PC-9 (cell line): ENCODE measurements at regions of chr1 and their contacts with region 1.

Region 1: DNA sequence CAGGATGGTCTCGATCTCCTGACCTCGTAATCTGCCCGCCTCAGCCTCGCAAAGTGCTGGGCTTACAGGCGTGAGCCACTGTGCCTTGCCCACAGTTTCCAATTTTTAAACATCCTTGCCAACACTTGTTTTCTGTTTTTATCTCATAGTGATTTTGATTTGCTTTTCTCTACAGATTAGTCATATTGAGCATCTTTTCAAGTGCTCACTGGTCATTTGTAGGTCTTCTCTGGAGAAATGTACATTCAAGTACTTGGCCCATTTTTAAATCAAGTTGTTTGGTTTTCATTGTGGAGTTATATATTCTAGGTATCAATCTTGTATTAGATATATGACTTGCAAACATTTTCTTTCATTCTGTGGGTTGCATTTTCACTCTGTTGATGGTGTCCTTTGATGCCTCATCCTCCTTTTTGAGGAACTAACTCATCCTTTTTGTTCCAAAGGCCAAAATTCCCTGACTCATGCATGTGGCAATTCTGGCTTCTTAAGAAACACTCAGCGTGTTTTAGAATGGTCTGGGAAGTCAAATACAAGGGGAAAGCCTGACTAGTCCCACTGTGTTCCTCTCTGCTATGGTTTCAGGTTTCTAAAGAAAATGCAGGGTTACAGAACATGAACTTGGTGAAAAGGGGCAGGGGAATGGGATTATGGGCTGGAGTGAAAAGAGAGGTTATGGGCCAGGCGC is 37.3 kb downstream of the PTAFR start:
- DNase-seq: peak in 1 of 2 experiments; percentile 45
- H3K4me3 ChIP-seq: no peak overlapping the region
- H3K27ac ChIP-seq: peak overlapping the region; percentile 26; the same call in 1 of the 2 replicates
- H3K4me1 ChIP-seq: peaks cover 42% of the 10 kb centered on the region
- H3K27me3 ChIP-seq: no peaks in the 10 kb centered on the region
- CTCF ChIP-seq: no peak

Region 2: DNA sequence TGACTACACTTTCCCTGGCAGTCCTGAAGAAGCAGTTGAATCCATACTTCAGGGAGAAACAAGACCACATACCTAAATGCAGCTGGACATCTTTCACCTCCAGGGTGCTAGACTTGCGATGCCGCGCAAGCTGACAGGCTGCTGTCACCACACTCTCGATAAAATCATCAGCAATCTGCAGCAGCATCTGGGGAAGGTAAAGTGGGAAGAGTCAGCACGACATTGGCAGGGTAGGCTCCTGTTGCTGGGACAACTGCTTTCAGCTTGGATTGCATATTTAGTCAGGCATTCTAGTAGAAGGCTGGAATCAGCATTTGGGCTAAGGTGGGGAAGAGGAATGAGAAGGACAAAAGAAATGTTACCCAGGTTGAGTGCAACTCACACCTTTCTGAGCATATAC is 474.0 kb after region 1 on chr1:
- CTCF ChIA-PET with region 1: no interaction called
- POLR2A ChIA-PET with region 1: interaction called, 29 read pairs
- intact Hi-C with region 1: no loop called
- DNase-seq: no peak
- H3K4me3 ChIP-seq: no peak overlapping the region
- H3K27ac ChIP-seq: no peak overlapping the region
- H3K4me1 ChIP-seq: no peaks in the 10 kb centered on the region
- H3K27me3 ChIP-seq: no peaks in the 10 kb centered on the region
- CTCF ChIP-seq: no peak

Region 3: GRCh38 chr1:28680141-28680540 is 541.0 kb after region 1 on chr1:
- CTCF ChIA-PET with region 1: interaction called, 10 read pairs
- POLR2A ChIA-PET with region 1: no interaction called
- intact Hi-C with region 1: no loop called
- DNase-seq: no peak
- H3K4me3 ChIP-seq: no peak overlapping the region
- H3K27ac ChIP-seq: no peak overlapping the region
- H3K4me1 ChIP-seq: 0 out of 2 replicates have a peak, but pooled peaks cover 2% of the 10 kb centered on the region
- H3K27me3 ChIP-seq: no peaks in the 10 kb centered on the region
- CTCF ChIP-seq: no peak